ENCODE measurements at regions of chr4 and their contacts with region 1.

Region 1: DNA sequence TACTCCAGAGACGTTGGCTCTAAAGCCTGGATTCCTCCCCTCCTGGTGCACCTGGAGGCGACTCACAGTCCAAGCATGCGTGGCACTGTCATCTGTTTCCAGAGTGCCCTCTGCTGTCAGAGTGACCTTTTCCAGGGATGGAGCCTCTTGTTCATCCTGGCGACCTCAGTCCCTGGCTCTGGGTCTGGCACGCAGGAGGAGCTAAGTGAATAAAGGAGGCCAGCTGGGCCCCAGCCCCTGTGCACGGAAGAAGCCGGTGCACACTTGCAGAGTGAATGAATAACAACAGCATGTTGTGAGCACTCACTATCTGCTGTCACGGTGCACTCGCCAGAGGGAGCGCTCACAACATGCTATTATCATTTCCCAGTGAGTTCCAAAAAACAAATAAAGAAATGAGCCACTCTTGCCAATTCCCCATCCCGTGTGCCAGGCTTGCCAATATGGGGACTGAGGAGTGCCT is 27.8 kb upstream of the PSAPL1 start:
- DNase-seq: peak; percentile 37 to 94 (median 64)

Region 2: DNA sequence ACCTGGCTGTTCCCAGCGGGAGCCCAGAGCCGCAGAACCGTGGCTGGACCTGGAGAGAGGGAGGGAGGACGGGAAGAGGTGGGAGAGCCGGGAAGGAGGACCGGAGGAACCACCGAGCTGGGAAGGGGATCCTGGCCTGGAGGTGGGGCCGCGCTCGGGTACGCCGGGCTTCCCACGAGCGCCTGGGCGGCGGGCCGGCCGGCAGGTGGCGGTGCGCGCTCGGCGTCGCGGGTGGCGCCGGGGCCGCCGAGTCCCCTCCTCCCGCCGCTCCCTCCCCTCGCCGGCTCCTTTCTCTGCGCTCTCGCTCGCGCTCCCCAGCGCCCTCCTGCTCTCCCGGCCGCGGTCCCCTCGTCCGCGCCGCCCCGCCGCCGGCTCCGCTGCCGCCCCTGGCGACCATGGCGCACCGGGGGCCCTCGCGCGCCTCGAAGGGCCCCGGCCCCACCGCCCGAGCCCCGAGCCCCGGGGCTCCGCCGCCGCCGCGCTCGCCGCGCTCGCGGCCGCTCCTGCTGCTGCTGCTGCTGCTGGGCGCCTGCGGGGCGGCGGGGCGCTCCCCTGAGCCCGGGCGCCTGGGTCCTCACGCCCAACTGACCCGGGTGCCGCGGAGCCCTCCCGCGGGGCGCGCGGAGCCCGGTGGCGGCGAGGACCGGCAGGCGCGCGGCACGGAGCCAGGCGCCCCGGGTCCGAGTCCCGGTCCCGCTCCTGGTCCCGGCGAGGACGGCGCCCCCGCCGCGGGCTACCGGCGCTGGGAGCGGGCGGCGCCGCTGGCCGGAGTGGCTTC is 270.1 kb before region 1 on chr4 and contains the start of gene SORCS2:
- intact Hi-C with region 1: loop called (anchors 1 kb)
- DNase-seq: peak; percentile 64 to 97 (median 74)

Region 3: DNA sequence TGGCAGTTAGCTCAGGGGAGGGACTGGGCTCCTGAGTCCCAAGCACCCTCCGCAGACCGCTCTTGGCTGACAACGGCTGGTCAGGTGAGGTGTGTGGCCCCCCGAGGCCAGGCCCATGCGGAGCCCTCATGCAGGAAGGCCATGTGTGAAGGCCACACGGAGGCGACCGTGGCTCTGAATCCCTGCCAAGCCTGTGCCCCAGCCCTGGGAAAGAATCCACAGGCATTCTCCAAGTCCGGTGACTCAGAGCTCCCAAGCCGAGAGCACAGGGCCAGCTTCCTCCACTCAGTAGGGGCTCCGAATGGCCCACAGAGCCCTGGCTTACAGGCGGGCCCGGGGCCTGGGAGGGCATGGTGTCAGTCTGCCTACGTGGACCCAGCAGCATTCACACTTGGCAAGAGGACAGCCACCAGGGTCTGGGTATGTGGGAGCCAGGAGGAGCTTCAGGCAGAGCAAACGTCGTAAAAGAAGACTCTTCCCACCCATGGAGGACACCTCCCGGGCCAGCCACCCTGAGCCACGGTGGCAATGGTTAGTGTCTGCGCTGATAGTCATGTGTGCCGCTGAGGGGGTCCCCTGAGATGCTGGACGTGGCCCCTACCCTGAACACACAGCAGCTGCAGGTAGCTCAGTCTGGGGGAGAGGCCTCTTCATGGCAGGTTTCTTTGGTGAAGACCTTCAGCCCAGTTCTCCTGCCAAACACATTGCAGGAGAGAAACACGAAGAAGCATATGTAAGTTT is 133.5 kb before region 1 on chr4:
- intact Hi-C with region 1: loop called (anchors 10 kb)
- DNase-seq: peak in 8 of 10 donors; percentile 34 to 89 (median 66)

Region 4: DNA sequence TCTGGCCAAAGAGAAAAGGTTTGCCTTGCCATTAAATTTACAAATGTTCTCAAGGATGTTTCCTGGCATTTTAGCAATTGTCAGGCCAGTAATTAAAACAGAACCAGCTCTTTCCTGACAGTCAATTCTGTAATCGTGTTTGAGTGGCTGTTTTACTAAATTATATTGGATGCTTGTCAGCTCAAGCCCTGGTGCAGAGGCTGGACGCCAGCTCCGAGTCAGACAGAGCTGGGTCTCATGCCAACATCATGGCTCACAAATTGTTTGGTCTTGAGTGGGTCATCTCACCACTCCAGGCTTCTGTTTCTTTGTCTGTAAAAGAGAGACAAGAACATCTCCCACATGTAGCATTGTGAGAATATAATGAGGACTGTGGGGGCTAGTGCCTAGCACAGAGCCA is 162.5 kb after region 1 on chr4:
- intact Hi-C with region 1: loop called (anchors 10 kb)
- DNase-seq: peak in 7 of 10 donors; percentile 23 to 88 (median 52)

Region 5: DNA sequence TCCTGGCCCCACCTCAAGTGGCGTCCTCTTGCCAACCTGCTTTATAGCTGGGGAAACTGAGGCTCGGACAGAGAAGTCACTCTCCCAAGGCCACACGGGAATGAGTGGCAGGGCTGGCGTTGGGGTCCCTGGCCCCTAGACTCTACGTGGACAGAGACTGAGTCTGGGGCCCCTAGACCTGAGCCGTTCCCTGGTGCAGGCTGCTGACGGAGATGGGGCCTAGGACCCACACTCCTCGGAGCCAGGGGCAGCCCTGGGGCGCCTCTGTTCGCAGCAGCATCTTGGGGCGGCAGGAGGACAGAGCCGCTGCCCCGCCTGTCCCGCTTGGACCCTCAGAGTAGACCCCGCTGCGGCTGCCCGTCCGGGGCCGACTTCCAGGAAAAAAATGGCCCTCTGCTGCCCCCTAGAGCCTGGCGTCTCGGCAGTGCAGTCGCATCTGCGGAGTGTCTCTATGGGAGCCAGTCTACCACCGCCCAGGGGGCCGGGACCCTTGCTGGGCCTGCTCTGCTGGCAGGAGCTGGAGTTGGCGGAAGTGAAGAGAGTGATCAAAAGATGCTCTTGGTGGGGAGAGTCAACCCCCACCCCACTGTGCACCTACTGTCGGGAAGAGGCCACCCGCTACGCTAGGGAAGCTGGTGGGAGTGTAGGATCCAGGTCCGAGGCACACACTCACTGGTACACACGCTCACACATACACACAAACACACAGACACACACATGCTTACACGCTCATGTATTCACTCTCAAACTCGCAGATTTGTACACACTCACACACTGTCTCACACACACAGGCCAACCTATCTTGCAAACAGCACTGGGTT is 257.0 kb after region 1 on chr4:
- intact Hi-C with region 1: loop called (anchors 1 kb)
- DNase-seq: peak; percentile 46 to 96 (median 81)

Region 6: DNA sequence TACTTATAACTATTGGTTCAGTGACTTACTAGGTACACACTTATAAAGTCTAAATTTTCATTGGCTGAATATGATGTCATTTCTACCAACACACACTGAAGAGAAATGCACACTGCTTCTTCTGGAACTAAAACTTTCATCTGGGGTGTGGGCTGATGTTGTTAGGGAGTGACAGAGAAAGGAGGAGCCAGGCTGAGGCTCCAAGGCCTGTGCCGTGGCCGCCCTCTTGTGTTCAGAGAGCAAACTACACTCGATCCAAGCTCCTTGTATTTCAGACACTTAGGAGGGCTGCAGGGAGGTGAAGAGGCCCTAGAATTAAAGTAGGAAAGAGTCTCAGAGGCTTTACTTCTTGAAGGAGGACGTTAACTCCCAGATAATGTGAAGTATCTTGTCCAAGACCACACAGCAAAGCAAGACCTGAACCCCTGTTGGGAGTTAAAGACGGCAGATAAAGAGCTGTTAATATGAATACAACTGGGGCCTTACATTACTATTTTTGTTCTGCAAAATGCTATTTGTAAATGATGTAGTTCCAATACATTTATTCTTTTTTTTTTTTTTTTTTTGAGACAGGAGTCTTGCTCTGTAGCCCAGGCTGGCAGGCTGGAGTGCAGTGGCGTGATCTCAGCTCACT is 339.7 kb after region 1 on chr4:
- intact Hi-C with region 1: loop called (anchors 5 kb)
- DNase-seq: peak; percentile 70 to 98 (median 88)